H1 (cell line): ENCODE measurements at regions of chr21 and their contacts with region 1.

Region 1: DNA sequence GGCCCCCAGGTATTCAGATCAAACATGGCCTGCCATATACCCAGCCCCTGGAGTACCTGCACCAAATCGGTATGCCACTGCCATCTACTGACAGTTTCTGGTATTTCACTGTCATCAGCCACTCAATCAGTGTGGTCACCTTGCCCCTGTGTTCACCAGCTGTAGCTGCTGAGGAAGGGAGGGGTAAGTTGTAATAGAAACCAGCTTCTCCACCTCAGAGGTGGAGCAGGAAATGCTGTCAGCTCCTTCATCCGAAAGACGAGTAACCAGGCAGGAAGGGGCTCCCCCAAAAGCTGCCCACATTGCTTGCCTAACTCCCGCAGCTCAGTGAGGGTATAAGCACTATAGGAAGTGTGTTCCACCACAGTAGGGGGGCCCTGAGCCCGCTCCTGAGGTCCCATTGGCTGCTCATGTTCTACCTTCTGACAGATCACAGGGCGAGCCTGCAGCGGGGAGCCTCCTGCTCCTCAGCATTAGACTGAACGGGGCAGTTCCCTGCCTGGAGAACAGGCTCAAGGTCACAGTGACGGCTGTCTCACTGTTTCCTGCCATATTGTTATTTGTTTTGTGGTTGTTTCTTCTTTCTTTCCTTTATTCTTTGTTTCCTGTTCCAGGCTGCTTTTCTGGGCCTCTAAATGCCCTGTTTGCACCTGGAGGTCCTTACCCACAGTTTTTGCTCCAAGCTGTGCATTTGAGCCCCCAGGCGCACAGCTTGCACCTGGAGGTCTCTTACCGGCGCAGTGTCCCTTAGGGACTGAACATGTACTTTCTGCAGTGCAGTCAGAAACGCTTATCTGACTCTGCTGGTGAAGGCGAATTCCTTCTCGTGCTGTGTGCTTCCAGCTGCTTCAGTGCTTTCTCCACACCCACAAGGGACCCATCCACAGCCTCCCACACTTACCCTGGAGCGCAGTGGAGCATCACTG is 1638.3 kb downstream of the MRPL39 start:
- DNase-seq: peak; percentile 57 to 86
- H3K4me3 ChIP-seq: no peak overlapping the region
- H3K27ac ChIP-seq: no peak overlapping the region
- H3K4me1 ChIP-seq: no peaks in the 10 kb centered on the region
- H3K27me3 ChIP-seq: no peaks in the 10 kb centered on the region
- CTCF ChIP-seq: peak; percentile 63 to 82 (median 68)
- EP300 ChIP-seq: no peak
- POLR2A ChIP-seq: no peak
- RAD21 ChIP-seq: peak; percentile 89

Region 2: DNA sequence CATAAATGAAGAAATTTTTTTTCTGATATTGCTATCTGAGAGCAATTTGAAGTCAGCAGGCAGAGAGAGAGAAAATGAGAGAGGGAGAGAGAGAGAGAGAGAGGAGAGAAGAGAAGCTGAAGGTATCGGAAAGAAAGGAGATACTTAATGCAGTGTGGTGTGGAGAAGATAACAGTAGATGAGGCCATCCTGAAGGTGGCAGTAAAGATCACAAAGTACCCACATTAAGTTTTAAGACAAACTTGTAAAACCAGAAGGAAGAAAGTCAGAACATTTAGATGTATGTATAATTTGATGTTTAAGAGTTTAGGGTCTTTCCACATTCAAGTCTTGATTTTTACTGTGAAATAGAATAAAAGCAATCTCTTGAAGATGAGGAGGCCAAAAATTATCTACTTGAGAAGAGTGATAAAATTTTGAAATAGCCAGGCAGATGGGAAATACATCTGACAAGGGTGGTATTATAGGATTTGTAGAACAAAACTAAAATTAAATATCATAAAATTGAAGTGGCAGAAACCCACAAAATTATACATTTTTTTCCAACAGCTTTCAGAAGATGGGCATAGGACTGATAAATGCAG is 115.1 kb before region 1 on chr21:
- CTCF ChIA-PET with region 1: interaction called, 11 read pairs
- POLR2A ChIA-PET with region 1: no interaction called
- DNase-seq: no peak
- H3K4me3 ChIP-seq: no peak overlapping the region
- H3K27ac ChIP-seq: no peak overlapping the region
- H3K4me1 ChIP-seq: no peaks in the 10 kb centered on the region
- H3K27me3 ChIP-seq: no peaks in the 10 kb centered on the region
- CTCF ChIP-seq: peak in 2 of 3 experiments; percentile 21 to 49; a peak in 2 of 4 replicates
- EP300 ChIP-seq: no peak
- POLR2A ChIP-seq: no peak
- RAD21 ChIP-seq: peak; percentile 44 to 53

Region 3: DNA sequence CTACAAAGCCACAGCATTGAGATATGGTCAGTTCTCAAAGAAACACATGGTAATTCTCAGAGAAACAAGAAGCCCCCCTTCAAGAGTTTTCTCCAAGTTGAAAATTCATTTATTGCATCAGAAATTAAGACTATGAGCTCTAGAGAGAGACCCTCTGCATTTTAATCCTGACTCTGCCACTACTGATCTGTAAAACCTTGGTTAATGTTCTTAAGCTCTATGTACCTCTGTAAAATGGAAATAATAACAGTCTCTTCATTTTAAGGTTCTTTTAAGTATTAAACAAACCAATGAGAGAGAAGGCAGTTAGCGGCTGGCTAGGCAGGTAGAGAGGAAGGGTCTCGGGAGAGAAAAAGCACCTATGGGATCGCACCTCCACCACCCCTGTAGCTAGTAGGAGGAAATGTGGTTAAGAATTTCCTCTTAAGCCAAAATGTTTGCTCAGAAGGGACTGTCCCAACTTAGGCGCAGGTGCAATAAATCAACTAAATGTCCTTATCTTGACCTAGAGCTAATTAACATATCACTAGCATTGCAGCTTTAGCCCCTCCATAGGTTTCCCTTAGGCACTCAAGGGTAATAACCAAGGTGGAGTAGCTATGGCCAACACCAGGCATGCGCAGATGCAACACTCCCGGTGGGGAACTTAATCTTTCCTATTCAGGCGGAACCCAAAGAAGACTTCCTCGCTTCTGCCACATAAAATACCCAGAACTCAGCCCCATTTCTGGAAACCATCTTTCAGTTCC is 47.1 kb before region 1 on chr21:
- CTCF ChIA-PET with region 1: no interaction called
- POLR2A ChIA-PET with region 1: no interaction called
- DNase-seq: no peak
- H3K4me3 ChIP-seq: no peak overlapping the region
- H3K27ac ChIP-seq: no peak overlapping the region
- H3K4me1 ChIP-seq: no peaks in the 10 kb centered on the region
- H3K27me3 ChIP-seq: no peaks in the 10 kb centered on the region
- CTCF ChIP-seq: no peak
- EP300 ChIP-seq: no peak
- POLR2A ChIP-seq: no peak
- RAD21 ChIP-seq: no peak